Activated B cell treated with CpG ODN at 0.5 μM for 24 hours (primary cell): ENCODE measurements at regions of chr17 and their contacts with region 1.

Region 1: DNA sequence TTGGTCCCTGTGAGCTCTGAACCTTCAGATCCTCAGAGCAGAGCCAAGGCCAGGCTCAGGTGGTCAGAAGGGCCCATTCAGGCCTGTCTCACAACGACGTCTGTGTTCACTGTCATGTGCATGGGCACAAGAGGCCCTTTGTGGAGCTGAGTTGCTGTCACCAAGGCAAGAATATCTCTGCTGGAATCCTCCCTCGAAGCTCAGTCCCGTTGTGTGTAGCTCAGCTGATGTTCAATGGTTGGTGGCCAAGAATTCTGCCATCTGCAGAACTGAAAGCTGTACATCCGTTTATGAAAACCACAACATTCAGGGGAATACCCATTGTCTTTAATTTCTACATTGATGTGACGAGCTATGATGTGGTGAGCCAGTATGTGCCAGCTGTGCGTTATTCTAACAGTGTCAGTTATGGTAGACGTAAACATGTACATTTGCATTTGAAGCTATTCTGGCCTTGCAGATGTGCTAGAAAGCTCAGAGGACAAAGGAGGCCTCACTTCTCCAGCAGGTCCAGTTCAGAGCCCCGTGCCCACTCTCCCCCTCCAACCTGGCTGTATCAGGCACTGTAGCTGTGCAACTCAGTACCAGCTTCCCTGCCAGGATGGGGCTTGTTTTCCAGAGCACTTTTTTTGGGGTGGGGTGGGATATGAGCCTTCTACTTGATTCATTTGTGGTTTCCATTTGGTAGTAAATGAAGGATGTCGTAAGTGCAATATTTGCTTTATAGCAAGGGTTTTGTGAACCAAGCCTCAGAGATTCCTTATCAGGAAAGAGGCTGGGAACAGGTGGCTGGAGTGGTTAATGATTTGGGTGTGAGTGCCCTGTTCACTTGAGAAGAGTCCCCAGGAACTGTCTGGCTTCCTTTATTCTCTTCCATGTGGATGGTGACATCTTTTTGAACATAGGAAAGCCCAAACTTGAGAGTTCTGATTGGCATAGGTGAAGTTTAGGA is 56.1 kb downstream of the B9D1 start:
- DNase-seq: peak; percentile 38
- ATAC-seq: peak; percentile 82
- H3K4me3 Mint-ChIP-seq: peak overlapping the region; percentile 68
- H3K27ac Mint-ChIP-seq: peak overlapping the region; percentile 69
- H3K4me1 Mint-ChIP-seq: peaks cover 77% of the 10 kb centered on the region
- H3K27me3 Mint-ChIP-seq: no peaks in the 10 kb centered on the region
- CTCF ChIP-seq: no peak

Region 2: DNA sequence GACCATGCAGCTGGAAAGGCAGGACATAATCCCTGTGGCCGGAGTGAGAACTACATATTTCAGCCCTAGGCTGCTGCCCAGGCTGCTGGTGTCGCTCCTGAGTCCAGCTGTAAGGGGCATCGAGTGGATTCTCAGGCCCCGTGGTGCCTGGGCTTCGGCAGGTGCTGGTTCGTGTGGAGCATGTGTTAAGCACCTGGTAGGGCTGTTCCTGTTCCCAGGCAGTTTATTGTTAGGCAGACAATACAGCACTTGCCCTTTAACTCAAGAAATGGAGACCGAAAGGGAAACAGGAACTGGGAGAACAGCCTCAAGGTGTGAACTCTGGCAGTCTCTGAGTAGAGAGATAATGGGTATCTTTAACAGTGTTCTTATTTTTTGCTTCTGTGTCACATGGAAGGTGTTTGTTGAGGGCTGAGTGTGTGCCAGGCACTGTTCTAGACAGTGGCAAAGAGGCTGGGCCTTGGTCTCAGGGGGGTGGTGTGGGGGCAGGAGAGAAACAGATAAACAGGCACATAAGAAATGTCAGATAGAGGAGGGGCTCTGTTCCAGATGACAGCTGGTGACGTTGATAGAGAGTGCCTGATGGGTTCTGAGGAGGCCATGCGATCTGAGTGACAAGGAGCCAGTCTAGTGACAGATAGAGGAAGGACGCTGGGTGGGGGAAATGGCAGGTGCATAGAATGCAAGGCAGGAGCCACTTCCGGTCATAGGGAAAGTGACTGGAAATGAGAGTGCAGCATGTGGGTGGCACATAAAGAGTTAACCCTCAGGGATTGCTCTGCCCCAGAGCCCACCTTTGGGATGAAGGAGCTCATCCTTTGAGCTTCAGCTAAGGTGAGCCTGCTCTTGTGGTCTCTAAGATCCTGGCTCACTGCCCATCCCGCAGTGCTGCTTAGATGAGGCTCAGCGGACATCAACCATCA is 35.5 kb before region 1 on chr17:
- CTCF ChIA-PET with region 1: no interaction called
- POLR2A ChIA-PET with region 1: interaction called, 4 read pairs
- intact Hi-C with region 1: loop called (anchors 5 kb)
- DNase-seq: peak; percentile 18
- ATAC-seq: peak; percentile 88
- H3K4me3 Mint-ChIP-seq: peak overlapping the region; percentile 60
- H3K27ac Mint-ChIP-seq: peak overlapping the region; percentile 51
- H3K4me1 Mint-ChIP-seq: peaks cover 34% of the 10 kb centered on the region
- H3K27me3 Mint-ChIP-seq: no peaks in the 10 kb centered on the region
- CTCF ChIP-seq: no peak

Region 3: GRCh38 chr17:19292377-19292711 is 14.1 kb before region 1 on chr17:
- CTCF ChIA-PET with region 1: no interaction called
- POLR2A ChIA-PET with region 1: interaction called, 12 read pairs
- intact Hi-C with region 1: no loop called
- DNase-seq: no peak
- ATAC-seq: no peak
- H3K4me3 Mint-ChIP-seq: no peak overlapping the region
- H3K27ac Mint-ChIP-seq: no peak overlapping the region
- H3K4me1 Mint-ChIP-seq: peaks cover 17% of the 10 kb centered on the region
- H3K27me3 Mint-ChIP-seq: peaks cover 16% of the 10 kb centered on the region
- CTCF ChIP-seq: no peak

Region 4: DNA sequence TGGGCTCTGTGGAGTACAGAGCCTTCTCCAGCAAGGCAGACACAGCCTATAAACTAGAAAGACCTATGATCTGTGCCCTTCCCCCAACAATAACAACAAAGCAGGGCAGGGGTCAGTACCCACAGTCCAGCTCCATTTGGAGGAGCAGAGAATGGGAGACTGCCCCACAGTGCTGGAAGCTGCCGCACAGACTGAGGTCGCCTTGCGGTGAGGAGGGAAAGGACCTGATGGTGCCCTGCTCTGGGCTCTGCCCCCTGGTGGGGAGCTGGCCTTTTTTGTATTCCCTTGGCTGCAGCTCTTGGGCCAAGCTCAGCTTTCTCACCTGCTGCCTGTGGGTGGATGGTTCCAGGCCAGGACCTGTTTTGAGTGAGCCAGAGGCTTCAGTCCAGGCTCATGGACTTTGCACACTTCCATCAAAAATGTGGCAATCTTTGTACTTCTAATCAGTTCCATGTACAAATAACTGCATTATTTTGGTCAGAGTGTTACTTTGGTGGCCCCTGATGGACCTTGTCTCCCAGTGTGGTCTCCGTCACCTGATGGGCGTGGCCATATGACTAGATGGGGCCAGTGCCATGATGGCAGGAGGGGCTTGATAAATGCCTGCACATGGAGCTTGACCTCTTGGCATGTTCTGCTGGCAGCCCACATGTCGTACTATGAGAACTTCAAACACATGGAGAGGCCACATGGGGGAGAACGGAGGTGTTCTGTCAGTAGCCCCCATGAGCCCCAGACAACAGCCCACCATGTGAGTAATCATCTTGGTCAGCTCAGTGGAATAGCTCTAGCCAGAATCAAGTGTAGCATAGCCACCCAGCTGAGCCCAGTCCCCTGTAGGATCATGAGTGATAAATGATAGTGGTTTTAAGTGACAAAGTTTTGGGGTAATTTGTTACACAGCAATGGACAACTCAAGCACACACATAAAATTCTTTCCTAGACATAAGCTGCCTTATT is 31.9 kb after region 1 on chr17:
- CTCF ChIA-PET with region 1: interaction called, 15 read pairs
- POLR2A ChIA-PET with region 1: no interaction called
- intact Hi-C with region 1: loop called (anchors 5 kb)
- DNase-seq: peak; percentile 65
- ATAC-seq: peak; percentile 99
- H3K4me3 Mint-ChIP-seq: no peak overlapping the region
- H3K27ac Mint-ChIP-seq: no peak overlapping the region
- H3K4me1 Mint-ChIP-seq: no peaks in the 10 kb centered on the region
- H3K27me3 Mint-ChIP-seq: no peaks in the 10 kb centered on the region
- CTCF ChIP-seq: peak; percentile 28

Region 5: DNA sequence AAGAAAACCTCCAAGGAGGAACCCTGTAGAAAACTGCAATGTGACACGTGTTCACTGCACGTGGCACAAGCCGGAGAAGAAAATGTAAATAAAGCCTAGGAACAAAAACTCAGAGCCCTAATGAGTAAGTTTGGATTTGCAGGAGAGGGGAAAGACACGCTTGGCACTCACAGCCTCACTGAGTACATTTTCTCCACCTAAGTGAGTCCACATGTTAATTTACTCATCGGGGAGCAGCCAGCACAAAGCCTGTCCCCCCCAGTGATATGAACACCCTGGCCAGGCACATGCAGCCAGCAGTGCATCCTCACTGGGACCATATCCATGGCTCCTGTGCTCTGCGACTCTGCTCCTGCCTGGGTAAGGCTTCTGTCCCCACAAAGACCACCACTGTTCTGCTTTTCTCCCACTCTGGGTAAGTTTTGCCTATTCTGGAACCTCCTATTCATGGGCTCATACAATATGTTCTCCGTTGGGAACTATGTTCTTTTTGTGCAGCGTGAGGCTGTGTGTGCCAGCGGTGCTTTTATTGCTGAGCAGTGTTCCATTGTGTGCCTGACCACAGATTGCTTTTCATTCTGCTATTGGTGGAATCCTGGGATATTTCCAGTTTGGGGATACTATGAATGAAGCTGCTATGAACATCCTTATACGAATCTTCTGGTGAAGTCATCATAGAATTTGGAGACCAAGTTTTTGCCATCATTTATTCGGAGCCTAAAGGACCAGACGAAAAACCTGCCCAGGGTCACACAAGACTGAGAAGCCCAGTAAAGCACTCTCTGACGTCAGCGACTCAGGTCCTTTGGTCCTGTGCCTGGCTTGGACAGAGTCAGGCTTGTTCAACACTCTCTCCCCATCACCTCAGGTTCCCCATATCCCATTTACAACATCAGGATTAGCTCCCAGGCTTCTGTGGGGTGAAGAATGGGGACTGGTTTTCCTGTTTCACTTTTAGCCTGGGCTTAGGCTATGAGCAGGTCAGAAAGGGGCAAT is 157.9 kb after region 1 on chr17:
- CTCF ChIA-PET with region 1: no interaction called
- POLR2A ChIA-PET with region 1: no interaction called
- intact Hi-C with region 1: loop called (anchors 5 kb)
- DNase-seq: no peak
- ATAC-seq: no peak
- H3K4me3 Mint-ChIP-seq: peak overlapping the region; percentile 36
- H3K27ac Mint-ChIP-seq: peak overlapping the region; percentile 92
- H3K4me1 Mint-ChIP-seq: peaks cover 49% of the 10 kb centered on the region
- H3K27me3 Mint-ChIP-seq: no peaks in the 10 kb centered on the region
- CTCF ChIP-seq: no peak